Kidney (tissue), 22 donors: ENCODE measurements at regions of chr21 and their contacts with region 1.

Region 1: GRCh38 chr21:42248783-42249597 is 30.1 kb downstream of the ABCG1 start:
- DNase-seq: peak in 1 of 5 donors; percentile 28
- H3K4me3 ChIP-seq: no peak overlapping the region
- H3K27ac ChIP-seq: no peak overlapping the region
- H3K4me1 ChIP-seq: no peaks in the 10 kb centered on the region
- H3K27me3 ChIP-seq: no peaks in the 10 kb centered on the region
- CTCF ChIP-seq: no peak

Region 2: DNA sequence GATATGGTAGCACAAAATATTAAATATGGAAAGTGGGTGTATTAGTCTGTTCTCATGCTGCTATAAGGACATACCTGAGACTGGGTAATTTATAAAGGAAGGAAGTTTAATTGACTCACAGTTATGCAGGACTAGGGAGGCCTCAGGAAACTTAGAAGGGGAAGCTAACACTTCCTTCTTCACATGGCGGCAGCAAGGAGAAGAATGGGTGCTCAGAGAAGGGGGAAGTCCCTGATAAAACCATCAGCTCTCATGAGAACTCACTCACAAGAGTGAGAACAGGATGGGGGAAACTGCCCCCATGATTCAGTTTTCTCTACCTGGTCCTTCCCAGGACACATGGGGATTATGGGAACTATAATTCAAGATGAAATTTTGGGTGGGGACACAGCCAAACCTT is 1096.8 kb before region 1 on chr21:
- intact Hi-C with region 1: no loop called
- DNase-seq: peak in 1 of 5 donors; percentile 0
- H3K4me3 ChIP-seq: no peak overlapping the region
- H3K27ac ChIP-seq: no peak overlapping the region
- H3K4me1 ChIP-seq: no peaks in the 10 kb centered on the region
- H3K27me3 ChIP-seq: no peaks in the 10 kb centered on the region
- CTCF ChIP-seq: no peak

Region 3: GRCh38 chr21:42376338-42376982 is 127.5 kb after region 1 on chr21:
- intact Hi-C with region 1: loop called (anchors 10 kb)
- DNase-seq: peak in 1 of 5 donors; percentile 65
- H3K4me3 ChIP-seq: no peak overlapping the region
- H3K27ac ChIP-seq: no peak overlapping the region
- H3K4me1 ChIP-seq: no peaks in the 10 kb centered on the region
- H3K27me3 ChIP-seq: no peaks in the 10 kb centered on the region
- CTCF ChIP-seq: no peak